Esophagus squamous epithelium (tissue), 5 donors: ENCODE measurements at regions of chr10 and their contacts with region 1.

Region 1: GRCh38 chr10:75401569-75402485 is at the start of gene ZNF503:
- DNase-seq: peak; percentile 53
- H3K4me3 ChIP-seq: peak within 1 kb of the TSS; percentile 66 to 96 (median 90)
- H3K27ac ChIP-seq: peak within 1 kb of the TSS; percentile 92 to 99 (median 98)
- H3K4me1 ChIP-seq: peaks cover 10 to 41% (median 12%) of the 10 kb centered on the region in 3 donors
- H3K27me3 ChIP-seq: peaks cover 0 to 15% (median 0%) of the 10 kb centered on the region in 4 donors
- CTCF ChIP-seq: peak in 5 of 6 experiments; percentile 20 to 70 (median 48)
- POLR2A ChIP-seq: peak in 3 of 4 donors; percentile 76 to 98 (median 96)
- total RNA-seq, gene ZNF503: 9.7 to 17.5 (median 14.8) TPM

Region 2: DNA sequence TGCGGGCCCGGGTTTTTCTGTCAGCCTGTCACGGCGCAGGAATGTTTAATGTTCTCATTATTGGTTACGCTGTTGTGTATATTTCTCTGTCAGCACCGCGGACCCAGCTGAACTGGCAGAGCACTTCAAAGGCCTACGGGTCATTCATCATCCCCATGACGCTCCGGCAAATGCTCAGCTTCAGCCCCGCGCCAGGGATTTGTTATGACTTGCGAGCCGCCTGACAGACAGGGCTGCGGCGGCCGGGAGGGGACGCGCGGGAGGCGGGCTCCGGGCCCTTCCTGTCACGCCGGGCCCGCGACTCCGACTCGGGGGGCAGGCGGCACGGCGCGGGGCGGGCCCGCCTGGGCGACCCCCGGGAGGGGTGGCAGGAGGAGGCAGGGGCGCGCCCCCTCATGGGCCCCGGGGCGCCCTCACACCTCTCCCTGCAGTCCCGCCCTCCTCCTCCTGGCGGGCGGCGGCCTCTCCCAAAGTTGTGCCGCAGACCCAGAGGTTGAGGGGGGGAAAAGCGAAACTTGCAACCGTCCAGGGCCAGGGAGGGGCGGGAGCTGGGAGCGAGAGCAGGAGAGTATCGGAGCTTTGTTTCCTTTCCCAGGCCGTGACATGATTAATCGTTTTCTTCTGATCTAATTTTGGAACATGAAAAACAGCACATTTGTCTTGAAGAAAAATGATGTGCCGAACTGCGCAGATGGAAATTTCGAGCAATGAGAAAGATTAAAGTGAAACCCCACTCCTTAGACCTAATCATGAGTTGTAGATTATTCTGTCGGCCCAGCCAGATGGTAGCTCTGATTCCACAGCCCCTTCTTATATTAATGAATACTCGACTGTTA is 106.7 kb before region 1 on chr10:
- intact Hi-C with region 1: loop called (anchors 5 kb)
- DNase-seq: no peak
- H3K4me3 ChIP-seq: peak overlapping the region; percentile 48 to 74 (median 57)
- H3K27ac ChIP-seq: peak overlapping the region; percentile 96 to 98 (median 97)
- H3K4me1 ChIP-seq: peaks cover 24 to 45% (median 31%) of the 10 kb centered on the region in 3 donors
- H3K27me3 ChIP-seq: no peaks in the 10 kb centered on the region
- CTCF ChIP-seq: peak; percentile 5 to 64 (median 42)
- POLR2A ChIP-seq: peak in 2 of 4 donors; percentile 53 to 69

Region 3: DNA sequence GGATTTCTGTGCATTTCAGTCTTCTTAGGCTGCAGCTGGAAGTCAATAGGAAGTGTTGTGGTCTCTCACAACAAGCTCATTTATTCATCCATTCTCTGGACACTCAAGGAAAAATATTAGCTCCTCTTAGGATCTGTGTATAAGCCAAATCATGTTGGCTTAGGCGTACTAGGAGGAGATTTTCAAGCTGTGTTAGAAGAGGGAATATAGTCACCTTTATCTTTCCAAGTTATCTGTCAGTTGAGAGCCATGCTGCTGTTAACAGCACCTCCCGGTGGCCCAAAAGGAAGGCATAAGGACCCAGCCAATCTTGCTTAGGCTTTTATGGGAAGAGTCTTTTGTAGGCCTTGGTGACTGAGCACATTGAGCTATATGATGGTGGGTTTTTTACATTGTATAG is 249.6 kb after region 1 on chr10:
- intact Hi-C with region 1: loop called (anchors 10 kb)
- DNase-seq: no peak
- H3K4me3 ChIP-seq: no peak overlapping the region
- H3K27ac ChIP-seq: peak overlapping the region in 3 of 4 donors; percentile 10 to 50 (median 17)
- H3K4me1 ChIP-seq: peaks cover 4 to 48% (median 16%) of the 10 kb centered on the region in 3 donors
- H3K27me3 ChIP-seq: no peaks in the 10 kb centered on the region
- CTCF ChIP-seq: peak in 3 of 6 experiments; percentile 27 to 51 (median 43)
- POLR2A ChIP-seq: no peak

Region 4: GRCh38 chr10:75865413-75866299 is 463.8 kb after region 1 on chr10:
- intact Hi-C with region 1: no loop called
- DNase-seq: no peak
- H3K4me3 ChIP-seq: no peak overlapping the region
- H3K27ac ChIP-seq: no peak overlapping the region
- H3K4me1 ChIP-seq: no peaks in the 10 kb centered on the region
- H3K27me3 ChIP-seq: no peaks in the 10 kb centered on the region
- CTCF ChIP-seq: no peak
- POLR2A ChIP-seq: no peak

Region 5: DNA sequence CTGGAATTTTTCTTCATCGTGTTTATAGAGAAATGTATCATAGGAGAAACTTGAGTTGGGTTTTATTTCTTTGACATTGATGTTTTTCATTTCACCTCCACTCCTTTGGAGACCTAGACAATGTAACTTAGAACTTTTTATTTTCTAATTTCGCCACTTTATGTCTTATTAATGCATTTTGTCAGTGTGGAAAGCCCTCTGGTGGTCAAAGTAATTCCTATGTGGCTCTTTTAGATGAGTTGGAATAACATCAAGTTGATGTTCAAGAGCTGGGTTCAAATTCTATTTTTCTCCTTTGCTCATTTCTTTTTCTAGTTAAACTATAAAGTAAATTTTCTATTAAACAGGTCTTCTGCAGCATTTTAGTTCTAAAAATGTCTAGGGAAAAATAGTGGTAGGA is 508.2 kb after region 1 on chr10:
- intact Hi-C with region 1: loop called (anchors 5 kb)
- DNase-seq: no peak
- H3K4me3 ChIP-seq: no peak overlapping the region
- H3K27ac ChIP-seq: no peak overlapping the region
- H3K4me1 ChIP-seq: no peaks in the 10 kb centered on the region
- H3K27me3 ChIP-seq: no peaks in the 10 kb centered on the region
- CTCF ChIP-seq: peak in 5 of 6 experiments; percentile 37 to 66 (median 58)
- POLR2A ChIP-seq: no peak

Region 6: DNA sequence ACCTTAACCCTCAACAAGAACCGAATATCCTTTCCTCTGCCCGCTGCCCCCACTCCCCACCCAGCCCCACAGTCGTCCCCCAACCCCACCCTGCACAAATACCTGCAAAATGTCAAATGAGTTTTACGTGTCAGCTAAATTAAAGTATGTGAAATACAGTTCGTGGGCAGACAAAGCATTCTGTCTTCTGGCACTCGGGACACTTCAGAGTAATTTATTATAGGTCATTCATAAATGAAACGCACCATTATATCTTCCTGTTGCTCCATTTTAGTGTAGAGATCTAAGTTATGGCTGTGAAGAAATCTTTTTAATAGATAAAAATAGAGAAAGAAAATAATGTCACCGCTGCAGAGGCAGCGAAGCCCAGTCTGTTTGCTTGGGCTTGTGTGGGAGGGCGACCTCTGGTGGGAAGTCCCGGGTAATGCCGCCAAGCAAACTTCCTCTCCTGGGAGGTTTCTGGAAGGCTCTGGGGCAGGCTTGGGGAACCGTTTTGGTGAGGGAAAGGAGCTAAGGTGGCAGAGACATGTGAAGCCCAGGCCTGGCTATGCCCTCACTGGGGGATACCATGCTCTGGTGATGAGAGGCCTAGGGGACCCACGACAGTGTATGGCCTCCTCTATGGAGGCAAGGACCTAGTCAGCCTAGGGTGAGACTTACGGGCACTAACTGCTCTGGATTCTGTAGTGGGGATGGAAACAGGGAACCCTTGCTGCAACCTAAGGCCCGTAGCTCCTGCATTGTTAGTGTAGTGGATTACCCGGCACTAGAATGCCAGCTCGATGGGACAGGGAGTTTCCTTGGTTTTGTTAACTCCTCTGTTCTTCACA is 634.5 kb after region 1 on chr10:
- intact Hi-C with region 1: loop called (anchors 5 kb)
- DNase-seq: no peak
- H3K4me3 ChIP-seq: peak overlapping the region in 1 of 4 donors; percentile 44
- H3K27ac ChIP-seq: peak overlapping the region in 2 of 4 donors; percentile 63 to 68
- H3K4me1 ChIP-seq: peaks cover 0 to 44% (median 18%) of the 10 kb centered on the region in 3 donors
- H3K27me3 ChIP-seq: no peaks in the 10 kb centered on the region
- CTCF ChIP-seq: peak; percentile 44 to 90 (median 86)
- POLR2A ChIP-seq: no peak